ENCODE measurements at regions of chr12 and their contacts with region 1.

Region 1: DNA sequence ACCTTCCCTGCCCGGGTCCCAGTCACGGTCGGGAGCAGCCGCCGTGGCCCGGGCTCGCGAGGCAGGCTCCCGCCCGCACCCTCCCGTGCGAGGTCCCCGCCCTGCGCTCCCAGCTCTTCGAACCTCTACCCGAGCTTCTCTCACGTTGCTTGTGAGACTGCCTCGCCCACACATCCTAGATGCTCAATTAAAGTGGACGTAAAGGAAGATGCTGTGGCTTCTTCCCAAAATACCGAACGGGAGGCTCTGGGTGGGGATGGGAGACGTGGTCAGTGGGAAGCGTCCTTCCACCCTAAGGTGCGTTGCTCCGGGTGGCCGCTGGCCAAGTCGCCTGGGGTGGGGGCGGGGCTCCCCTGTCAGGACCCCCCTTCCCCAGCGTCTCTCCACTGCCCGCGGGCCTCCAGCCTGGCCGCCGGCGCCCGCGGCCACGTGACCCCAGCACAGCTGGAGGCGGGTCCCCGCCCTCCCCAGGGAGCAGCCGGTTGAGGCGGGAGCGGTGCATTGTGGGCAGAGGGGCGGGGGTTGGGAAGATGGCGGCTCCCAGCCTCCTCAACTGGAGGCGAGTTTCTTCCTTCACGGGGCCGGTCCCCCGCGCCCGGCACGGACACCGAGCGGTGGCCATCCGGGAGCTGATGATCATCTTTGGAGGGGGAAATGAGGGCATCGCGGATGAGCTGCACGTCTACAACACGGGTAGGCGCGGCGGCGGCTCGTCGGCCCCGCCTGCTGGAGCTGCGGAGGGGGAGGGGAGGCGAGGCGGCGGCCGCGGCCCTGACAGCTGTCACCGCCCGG is at the start of gene HCFC2:
- DNase-seq: peak; percentile 94
- ATAC-seq: peak; percentile 95
- H3K4me3 Mint-ChIP-seq: peak within 1 kb of the TSS; percentile 97
- H3K27ac Mint-ChIP-seq: peak within 1 kb of the TSS; percentile 89
- H3K4me1 Mint-ChIP-seq: peaks cover 13% of the 10 kb centered on the region
- H3K27me3 Mint-ChIP-seq: peaks cover 9% of the 10 kb centered on the region
- CTCF ChIP-seq: no peak
- total RNA-seq, gene HCFC2: 7.4 and 11.2 TPM in 2 replicates

Region 2: DNA sequence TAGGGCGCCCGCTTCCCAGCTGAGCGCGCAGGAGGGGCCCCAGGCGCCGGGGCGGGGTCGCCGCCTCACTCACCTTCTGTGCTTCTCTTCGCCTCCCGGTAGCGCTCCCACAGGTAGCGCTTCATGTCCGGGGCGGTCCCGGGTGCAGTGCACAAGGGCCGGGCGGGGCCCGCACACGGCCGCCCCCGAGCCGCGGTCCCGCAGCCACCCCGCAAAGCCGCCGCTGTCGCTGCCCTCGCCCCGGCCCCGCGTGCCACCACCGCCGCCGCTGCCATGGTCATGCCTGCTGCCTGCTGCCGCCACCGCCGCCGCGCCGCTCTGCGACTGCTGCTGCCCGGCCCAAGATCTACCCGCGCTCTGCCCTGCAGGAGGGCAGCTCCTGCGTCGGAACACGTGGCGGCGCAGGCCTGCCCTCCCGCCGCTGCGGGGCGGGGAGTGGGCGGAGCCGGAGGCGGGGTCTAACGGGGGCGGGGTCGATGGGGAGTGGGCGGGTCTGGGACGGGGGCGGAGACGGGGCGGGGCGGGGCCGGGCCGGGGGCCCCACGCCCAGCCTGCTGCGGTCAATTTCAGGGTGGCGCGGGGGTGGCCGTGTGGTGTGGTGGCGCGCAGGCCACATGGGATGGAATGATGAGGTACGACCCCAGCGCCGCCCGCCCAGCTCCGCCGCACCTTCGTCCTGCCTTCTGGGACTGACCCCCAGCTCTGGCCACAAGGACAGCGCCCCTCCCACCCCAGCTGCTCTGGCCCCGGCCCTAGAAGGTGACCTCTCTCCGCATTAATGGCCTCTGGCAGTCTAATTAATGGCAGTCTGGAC is 223.1 kb before region 1 on chr12 and contains the start of gene NT5DC3:
- CTCF ChIA-PET with region 1: no interaction called
- POLR2A ChIA-PET with region 1: no interaction called
- intact Hi-C with region 1: loop called (anchors 1 kb)
- DNase-seq: peak; percentile 83
- ATAC-seq: peak; percentile 91
- H3K4me3 Mint-ChIP-seq: peak within 1 kb of the TSS; percentile 89
- H3K27ac Mint-ChIP-seq: peak within 1 kb of the TSS; percentile 84
- H3K4me1 Mint-ChIP-seq: peaks cover 32% of the 10 kb centered on the region
- H3K27me3 Mint-ChIP-seq: no peaks in the 10 kb centered on the region
- CTCF ChIP-seq: no peak
- total RNA-seq, gene NT5DC3: 11.6 and 12.4 TPM in 2 replicates

Region 3: DNA sequence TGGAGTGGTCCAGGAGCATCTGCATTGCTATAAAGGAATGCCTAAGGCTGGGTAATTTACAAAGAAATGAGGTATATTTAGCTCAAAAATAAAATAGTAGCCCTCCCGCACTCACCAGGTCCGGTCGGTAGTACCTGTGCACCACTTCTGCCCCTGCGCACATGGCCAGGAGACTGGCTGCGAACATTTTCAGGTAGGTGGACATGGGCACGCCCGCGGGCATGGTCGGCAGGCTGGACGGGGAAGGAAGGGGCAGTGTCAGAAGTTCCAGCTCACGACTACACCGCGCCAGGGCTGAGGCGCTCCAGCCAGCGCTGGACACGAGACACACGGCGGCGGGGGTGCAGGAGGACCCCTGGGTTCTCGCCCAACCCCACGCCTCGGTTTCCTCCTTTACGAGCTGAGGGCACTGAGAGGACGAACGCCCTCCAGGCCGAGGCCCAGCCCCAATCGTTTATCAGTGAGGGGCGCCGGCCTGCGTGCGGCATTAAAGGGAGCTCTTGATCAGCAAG is 107.7 kb before region 1 on chr12:
- CTCF ChIA-PET with region 1: no interaction called
- POLR2A ChIA-PET with region 1: interaction called, 9 read pairs
- intact Hi-C with region 1: loop called (anchors 1 kb)
- DNase-seq: no peak
- ATAC-seq: no peak
- H3K4me3 Mint-ChIP-seq: peak overlapping the region; percentile 99
- H3K27ac Mint-ChIP-seq: peak overlapping the region; percentile 97
- H3K4me1 Mint-ChIP-seq: peaks cover 27% of the 10 kb centered on the region
- H3K27me3 Mint-ChIP-seq: no peaks in the 10 kb centered on the region
- CTCF ChIP-seq: no peak

Region 4: GRCh38 chr12:104090687-104091086 is 26.5 kb after region 1 on chr12:
- CTCF ChIA-PET with region 1: no interaction called
- POLR2A ChIA-PET with region 1: no interaction called
- intact Hi-C with region 1: no loop called
- DNase-seq: no peak
- ATAC-seq: no peak
- H3K4me3 Mint-ChIP-seq: no peak overlapping the region
- H3K27ac Mint-ChIP-seq: no peak overlapping the region
- H3K4me1 Mint-ChIP-seq: no peaks in the 10 kb centered on the region
- H3K27me3 Mint-ChIP-seq: no peaks in the 10 kb centered on the region
- CTCF ChIP-seq: no peak

Region 5: GRCh38 chr12:104108755-104109445 is 44.7 kb after region 1 on chr12:
- CTCF ChIA-PET with region 1: interaction called, 65 read pairs
- POLR2A ChIA-PET with region 1: interaction called, 3 read pairs
- intact Hi-C with region 1: no loop called
- DNase-seq: peak; percentile 58
- ATAC-seq: peak; percentile 94
- H3K4me3 Mint-ChIP-seq: peak overlapping the region; percentile 11
- H3K27ac Mint-ChIP-seq: no peak overlapping the region
- H3K4me1 Mint-ChIP-seq: peaks cover 9% of the 10 kb centered on the region
- H3K27me3 Mint-ChIP-seq: no peaks in the 10 kb centered on the region
- CTCF ChIP-seq: peak; percentile 92

Region 6: DNA sequence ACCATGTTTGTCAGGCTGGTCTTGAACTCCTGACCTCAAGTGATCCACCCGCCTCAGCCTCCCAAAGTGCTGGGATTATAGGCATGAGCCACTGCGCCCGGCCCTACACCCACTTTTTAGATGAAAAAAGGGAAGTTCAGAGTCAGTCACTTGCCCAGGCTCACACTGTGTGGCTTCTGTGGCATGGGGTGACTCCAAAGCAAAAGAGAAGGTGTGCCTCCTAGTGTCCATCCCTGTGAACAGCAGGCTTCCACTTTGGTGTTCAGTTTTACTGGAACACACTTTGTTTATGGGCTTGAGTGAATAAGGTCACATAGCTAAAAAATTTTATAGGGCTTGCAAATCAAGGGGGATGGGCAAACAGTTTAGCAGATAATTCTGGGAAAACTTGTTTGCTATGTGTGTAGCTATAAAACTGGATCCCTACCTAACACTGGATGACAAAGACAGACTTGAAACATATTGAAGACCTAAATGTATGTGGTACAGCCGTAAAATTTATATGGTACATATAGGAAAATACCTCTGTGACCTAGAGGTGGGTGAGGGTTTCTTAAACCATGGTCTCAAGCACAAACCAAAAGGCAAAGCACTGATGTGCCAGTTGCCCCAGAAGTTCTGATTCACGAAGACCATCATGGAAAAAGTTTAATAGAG is 294.2 kb after region 1 on chr12:
- CTCF ChIA-PET with region 1: no interaction called
- POLR2A ChIA-PET with region 1: no interaction called
- intact Hi-C with region 1: loop called (anchors 5 kb)
- DNase-seq: peak; percentile 35
- ATAC-seq: peak; percentile 98
- H3K4me3 Mint-ChIP-seq: no peak overlapping the region
- H3K27ac Mint-ChIP-seq: peak overlapping the region; percentile 8
- H3K4me1 Mint-ChIP-seq: no peaks in the 10 kb centered on the region
- H3K27me3 Mint-ChIP-seq: no peaks in the 10 kb centered on the region
- CTCF ChIP-seq: no peak

Measured in activated B cell treated with CpG ODN at 0.5 μM for 24 hours (primary cell).